CD4-positive, alpha-beta T cell (primary cell): ENCODE measurements at regions of chr5 and their contacts with region 1.

Region 1: DNA sequence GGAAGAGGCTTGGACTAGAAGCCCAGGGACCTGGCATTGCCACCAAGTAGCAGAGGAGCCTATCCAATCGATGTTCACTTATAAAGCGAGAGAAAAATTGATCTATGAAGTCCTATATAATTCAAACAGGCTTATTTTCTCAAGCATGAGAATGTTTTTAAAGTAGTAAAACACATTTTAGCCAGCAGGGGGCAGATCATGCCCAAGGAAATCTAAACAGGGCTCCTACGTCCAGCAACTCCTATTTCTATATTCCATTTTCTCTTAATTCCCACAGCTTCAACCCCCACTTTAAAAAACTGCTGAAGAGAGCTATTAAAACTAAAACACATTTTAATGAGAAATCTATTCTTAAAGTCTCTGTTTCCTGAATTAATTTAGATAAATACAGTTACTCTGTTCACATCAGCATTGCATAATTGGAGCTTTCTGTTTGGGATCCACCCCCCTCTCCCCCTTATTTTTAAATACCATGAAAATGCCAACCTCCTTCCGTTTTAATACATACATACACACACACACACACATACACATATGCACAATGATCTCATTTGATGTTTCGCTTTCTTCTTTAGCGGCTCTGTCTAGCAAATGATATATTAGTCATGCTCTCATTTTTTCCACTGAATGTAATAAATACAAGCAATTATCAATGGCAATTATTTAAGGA is 144.9 kb downstream of the MYO10 start:
- DNase-seq: peak in 4 of 14 experiments; percentile 16 to 54 (median 44)
- ATAC-seq: no peak
- H3K4me3 ChIP-seq: no peak overlapping the region
- H3K4me3 Mint-ChIP-seq: peak overlapping the region; percentile 14
- H3K27ac ChIP-seq: no peak overlapping the region
- H3K27ac Mint-ChIP-seq: no peak overlapping the region
- H3K4me1 ChIP-seq: no peaks in the 10 kb centered on the region
- H3K4me1 Mint-ChIP-seq: peaks cover 8% of the 10 kb centered on the region
- H3K27me3 ChIP-seq: no peaks in the 10 kb centered on the region
- H3K27me3 Mint-ChIP-seq: no peaks in the 10 kb centered on the region
- CTCF ChIP-seq: peak; percentile 74

Region 2: GRCh38 chr5:16842896-16843295 is 51.7 kb after region 1 on chr5:
- CTCF ChIA-PET with region 1: no interaction called
- POLR2A ChIA-PET with region 1: no interaction called
- intact Hi-C with region 1: no loop called
- DNase-seq: no peak
- ATAC-seq: no peak
- H3K4me3 ChIP-seq: no peak overlapping the region
- H3K4me3 Mint-ChIP-seq: no peak overlapping the region
- H3K27ac ChIP-seq: no peak overlapping the region
- H3K27ac Mint-ChIP-seq: no peak overlapping the region
- H3K4me1 ChIP-seq: no peaks in the 10 kb centered on the region
- H3K4me1 Mint-ChIP-seq: no peaks in the 10 kb centered on the region
- H3K27me3 ChIP-seq: peaks cover 0 to 7% of the 10 kb centered on the region in 2 experiments
- H3K27me3 Mint-ChIP-seq: peaks cover 28% of the 10 kb centered on the region
- CTCF ChIP-seq: no peak

Region 3: GRCh38 chr5:17189381-17190036 is 398.3 kb after region 1 on chr5:
- CTCF ChIA-PET with region 1: no interaction called
- POLR2A ChIA-PET with region 1: no interaction called
- intact Hi-C with region 1: loop called (anchors 2 kb)
- DNase-seq: peak; percentile 16 to 67 (median 27)
- ATAC-seq: no peak
- H3K4me3 ChIP-seq: no peak overlapping the region
- H3K4me3 Mint-ChIP-seq: no peak overlapping the region
- H3K27ac ChIP-seq: no peak overlapping the region
- H3K27ac Mint-ChIP-seq: no peak overlapping the region
- H3K4me1 ChIP-seq: no peaks in the 10 kb centered on the region
- H3K4me1 Mint-ChIP-seq: no peaks in the 10 kb centered on the region
- H3K27me3 ChIP-seq: no peaks in the 10 kb centered on the region
- H3K27me3 Mint-ChIP-seq: peaks cover 20% of the 10 kb centered on the region
- CTCF ChIP-seq: peak; percentile 74

Region 4: GRCh38 chr5:18314192-18314778 is 1523.1 kb after region 1 on chr5:
- CTCF ChIA-PET with region 1: no interaction called
- POLR2A ChIA-PET with region 1: no interaction called
- intact Hi-C with region 1: loop called in 1 of 2 experiments (anchors 10 kb)
- DNase-seq: peak in 3 of 14 experiments; percentile 9 to 15 (median 9)
- ATAC-seq: no peak
- H3K4me3 ChIP-seq: no peak overlapping the region
- H3K4me3 Mint-ChIP-seq: no peak overlapping the region
- H3K27ac ChIP-seq: no peak overlapping the region
- H3K27ac Mint-ChIP-seq: no peak overlapping the region
- H3K4me1 ChIP-seq: no peaks in the 10 kb centered on the region
- H3K4me1 Mint-ChIP-seq: no peaks in the 10 kb centered on the region
- H3K27me3 ChIP-seq: no peaks in the 10 kb centered on the region
- H3K27me3 Mint-ChIP-seq: no peaks in the 10 kb centered on the region
- CTCF ChIP-seq: peak; percentile 63